ENCODE measurements at regions of chr5 and their contacts with region 1.

Region 1: DNA sequence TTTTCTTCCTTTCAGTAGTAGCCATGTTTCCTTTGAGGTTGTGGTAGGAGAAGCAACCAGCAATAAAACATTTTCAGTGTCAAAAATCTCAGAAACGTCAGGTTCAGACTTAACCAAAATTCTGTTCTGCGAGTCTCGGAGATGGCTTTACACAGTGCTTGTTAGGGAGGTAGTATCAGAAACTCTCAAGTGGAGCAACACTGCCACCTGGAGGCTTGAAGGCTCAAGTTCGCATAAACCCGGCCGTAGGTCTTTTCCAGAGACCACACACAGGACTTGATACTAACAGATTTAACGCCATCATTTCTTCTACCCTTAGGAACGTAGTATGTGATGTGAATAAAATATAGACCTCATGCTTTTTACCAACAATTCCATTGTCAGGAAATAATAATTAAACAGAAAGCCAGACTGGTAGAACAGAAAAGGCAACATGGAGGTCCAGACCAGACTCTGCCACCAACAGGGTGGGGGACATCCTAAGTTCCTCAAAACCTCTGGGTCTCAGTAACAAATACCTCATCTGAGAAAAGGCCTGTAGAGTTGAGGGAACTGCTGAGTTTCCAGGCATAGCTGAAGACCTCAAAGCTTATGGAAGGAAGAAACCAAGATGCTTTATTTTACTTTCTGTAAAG is 8.5 kb downstream of the PTGER4 start:
- DNase-seq: peak; percentile 58 to 88 (median 83)
- ATAC-seq: peak; percentile 88
- H3K4me3 ChIP-seq: peak overlapping the region; percentile 38
- H3K4me3 Mint-ChIP-seq: peak overlapping the region; percentile 76 to 100 (median 95)
- H3K27ac ChIP-seq: peak overlapping the region; percentile 60
- H3K27ac Mint-ChIP-seq: peak overlapping the region; percentile 87 to 98 (median 96)
- H3K4me1 ChIP-seq: peaks cover 30 to 32% of the 10 kb centered on the region in 2 donors
- H3K4me1 Mint-ChIP-seq: peaks cover 60 to 90% (median 82%) of the 10 kb centered on the region in 7 donors
- H3K27me3 ChIP-seq: no peaks in the 10 kb centered on the region
- H3K27me3 Mint-ChIP-seq: no peaks in the 10 kb centered on the region

Region 2: GRCh38 chr5:39177631-39177964 is 1510.6 kb before region 1 on chr5:
- CTCF ChIA-PET with region 1: no interaction called
- POLR2A ChIA-PET with region 1: no interaction called
- intact Hi-C with region 1: loop called in 1 of 2 experiments (anchors 10 kb)
- DNase-seq: peak in 7 of 9 donors; percentile 61 to 86 (median 79)
- ATAC-seq: peak; percentile 79
- H3K4me3 ChIP-seq: peak overlapping the region; percentile 46
- H3K4me3 Mint-ChIP-seq: peak overlapping the region; percentile 58 to 86 (median 80)
- H3K27ac ChIP-seq: peak overlapping the region; percentile 72
- H3K27ac Mint-ChIP-seq: peak overlapping the region; percentile 87 to 98 (median 96)
- H3K4me1 ChIP-seq: peaks cover 94 to 95% of the 10 kb centered on the region in 2 donors
- H3K4me1 Mint-ChIP-seq: peaks cover 84 to 100% (median 96%) of the 10 kb centered on the region in 7 donors
- H3K27me3 ChIP-seq: no peaks in the 10 kb centered on the region
- H3K27me3 Mint-ChIP-seq: no peaks in the 10 kb centered on the region

Region 3: DNA sequence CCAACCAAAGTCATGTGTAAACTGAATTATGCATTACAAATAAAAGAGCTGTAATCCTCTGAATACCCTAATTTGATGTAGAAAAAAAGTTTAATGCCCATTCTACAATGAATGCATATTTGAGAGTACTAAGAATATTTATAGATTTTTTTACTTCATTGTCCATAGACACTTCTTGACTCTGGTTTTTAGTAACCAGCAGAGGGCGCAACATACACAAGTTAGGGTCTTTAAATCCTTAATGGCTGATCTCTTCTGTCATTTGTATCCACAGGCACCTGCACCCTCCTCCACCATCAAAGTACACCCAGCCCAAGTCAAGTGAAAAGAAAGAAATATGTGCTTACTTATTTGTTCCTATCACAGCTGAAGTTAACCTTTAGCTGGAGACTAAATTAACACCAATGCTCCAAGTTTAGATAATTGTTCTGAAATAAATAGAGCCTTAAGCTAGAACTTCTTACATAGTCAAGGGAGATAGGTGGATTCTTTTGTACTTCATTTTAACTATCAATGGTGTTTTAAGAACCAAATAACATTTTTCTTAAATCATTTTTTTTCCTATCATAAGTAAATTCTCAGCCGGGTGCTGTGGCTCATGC is 739.3 kb before region 1 on chr5:
- CTCF ChIA-PET with region 1: interaction called, 33 read pairs
- POLR2A ChIA-PET with region 1: no interaction called
- intact Hi-C with region 1: loop called (anchors 1 kb)
- DNase-seq: peak in 8 of 9 donors; percentile 30 to 74 (median 63)
- ATAC-seq: peak; percentile 91
- H3K4me3 ChIP-seq: no peak overlapping the region
- H3K4me3 Mint-ChIP-seq: no peak overlapping the region
- H3K27ac ChIP-seq: no peak overlapping the region
- H3K27ac Mint-ChIP-seq: no peak overlapping the region
- H3K4me1 ChIP-seq: no peaks in the 10 kb centered on the region
- H3K4me1 Mint-ChIP-seq: peaks cover 0 to 4% (median 0%) of the 10 kb centered on the region in 7 donors
- H3K27me3 ChIP-seq: no peaks in the 10 kb centered on the region
- H3K27me3 Mint-ChIP-seq: no peaks in the 10 kb centered on the region

Region 4: DNA sequence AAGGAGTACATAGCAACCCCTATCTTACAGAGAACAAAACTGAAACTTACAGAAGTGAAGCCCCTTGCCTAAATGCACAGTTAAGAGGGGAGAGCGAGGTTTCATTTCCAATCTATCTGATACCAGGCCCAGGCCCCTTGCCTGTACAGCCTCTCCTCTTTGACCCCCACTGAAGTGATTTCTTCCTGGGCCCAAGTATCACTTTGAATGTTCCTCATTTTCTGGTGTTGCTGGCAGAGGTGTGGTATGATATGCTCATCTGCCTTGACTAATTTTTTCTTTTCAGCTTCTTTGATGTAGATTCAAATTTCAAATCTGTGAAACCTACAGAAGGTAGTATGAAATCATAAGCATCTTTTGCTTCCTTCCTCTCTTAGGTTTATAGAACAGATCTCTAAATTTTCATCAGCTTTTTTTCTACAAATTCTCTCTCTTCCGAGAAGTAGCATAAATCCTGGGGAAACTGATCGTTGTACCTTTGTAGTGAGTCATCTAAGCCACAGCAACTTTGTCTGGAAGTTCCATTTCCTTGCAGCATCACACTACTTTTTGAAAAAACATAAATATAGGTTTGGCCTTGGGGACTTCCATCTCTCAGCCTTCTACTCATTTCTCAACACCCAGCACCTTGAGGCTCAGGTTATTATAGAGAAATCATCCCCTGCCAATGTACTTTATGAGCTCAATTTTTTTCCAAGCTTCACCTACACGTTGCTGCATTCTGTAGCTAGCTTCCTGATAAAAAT is 410.9 kb before region 1 on chr5:
- CTCF ChIA-PET with region 1: no interaction called
- POLR2A ChIA-PET with region 1: no interaction called
- intact Hi-C with region 1: loop called in 1 of 2 experiments (anchors 2 kb)
- DNase-seq: peak in 2 of 9 donors; percentile 6 to 34
- ATAC-seq: peak; percentile 72
- H3K4me3 ChIP-seq: no peak overlapping the region
- H3K4me3 Mint-ChIP-seq: peak overlapping the region in 9 of 10 donors; percentile 7 to 72 (median 42)
- H3K27ac ChIP-seq: peak overlapping the region; percentile 45
- H3K27ac Mint-ChIP-seq: peak overlapping the region; percentile 66 to 88 (median 76)
- H3K4me1 ChIP-seq: peaks cover 9 to 16% of the 10 kb centered on the region in 2 donors
- H3K4me1 Mint-ChIP-seq: peaks cover 18 to 39% (median 33%) of the 10 kb centered on the region in 7 donors
- H3K27me3 ChIP-seq: no peaks in the 10 kb centered on the region
- H3K27me3 Mint-ChIP-seq: no peaks in the 10 kb centered on the region

Region 5: GRCh38 chr5:40410231-40410861 is 277.9 kb before region 1 on chr5:
- CTCF ChIA-PET with region 1: interaction called, 10 read pairs
- POLR2A ChIA-PET with region 1: interaction called, 6 read pairs
- intact Hi-C with region 1: loop called in 1 of 2 experiments (anchors 1 kb)
- DNase-seq: peak; percentile 23 to 98 (median 93)
- ATAC-seq: peak; percentile 91
- H3K4me3 ChIP-seq: no peak overlapping the region
- H3K4me3 Mint-ChIP-seq: peak overlapping the region; percentile 49 to 87 (median 80)
- H3K27ac ChIP-seq: peak overlapping the region; percentile 99
- H3K27ac Mint-ChIP-seq: peak overlapping the region; percentile 95 to 100 (median 99)
- H3K4me1 ChIP-seq: peaks cover 54 to 56% of the 10 kb centered on the region in 2 donors
- H3K4me1 Mint-ChIP-seq: peaks cover 38 to 76% (median 65%) of the 10 kb centered on the region in 7 donors
- H3K27me3 ChIP-seq: no peaks in the 10 kb centered on the region
- H3K27me3 Mint-ChIP-seq: no peaks in the 10 kb centered on the region

Region 6: GRCh38 chr5:40736103-40736875 is 48.0 kb after region 1 on chr5:
- CTCF ChIA-PET with region 1: no interaction called
- POLR2A ChIA-PET with region 1: interaction called, 3 read pairs
- intact Hi-C with region 1: loop called (anchors 1 kb)
- DNase-seq: peak in 7 of 9 donors; percentile 26 to 60 (median 52)
- ATAC-seq: peak; percentile 81
- H3K4me3 ChIP-seq: no peak overlapping the region
- H3K4me3 Mint-ChIP-seq: no peak overlapping the region
- H3K27ac ChIP-seq: no peak overlapping the region
- H3K27ac Mint-ChIP-seq: no peak overlapping the region
- H3K4me1 ChIP-seq: no peaks in the 10 kb centered on the region
- H3K4me1 Mint-ChIP-seq: peaks cover 18 to 33% (median 24%) of the 10 kb centered on the region in 7 donors
- H3K27me3 ChIP-seq: no peaks in the 10 kb centered on the region
- H3K27me3 Mint-ChIP-seq: no peaks in the 10 kb centered on the region

Region 7: GRCh38 chr5:40871177-40871576 is 182.9 kb after region 1 on chr5:
- CTCF ChIA-PET with region 1: no interaction called
- POLR2A ChIA-PET with region 1: no interaction called
- intact Hi-C with region 1: no loop called
- DNase-seq: no peak
- ATAC-seq: no peak
- H3K4me3 ChIP-seq: no peak overlapping the region
- H3K4me3 Mint-ChIP-seq: no peak overlapping the region
- H3K27ac ChIP-seq: no peak overlapping the region
- H3K27ac Mint-ChIP-seq: no peak overlapping the region
- H3K4me1 ChIP-seq: no peaks in the 10 kb centered on the region
- H3K4me1 Mint-ChIP-seq: peaks cover 0 to 2% (median 0%) of the 10 kb centered on the region in 7 donors
- H3K27me3 ChIP-seq: no peaks in the 10 kb centered on the region
- H3K27me3 Mint-ChIP-seq: peaks cover 0 to 10% (median 0%) of the 10 kb centered on the region in 5 donors

Region 8: GRCh38 chr5:41869739-41870626 is 1181.7 kb after region 1 on chr5 and contains the start of gene OXCT1:
- CTCF ChIA-PET with region 1: no interaction called
- POLR2A ChIA-PET with region 1: no interaction called
- intact Hi-C with region 1: loop called in 1 of 2 experiments (anchors 10 kb)
- DNase-seq: peak; percentile 88 to 96 (median 95)
- ATAC-seq: peak; percentile 97
- H3K4me3 ChIP-seq: peak within 1 kb of the TSS; percentile 91
- H3K4me3 Mint-ChIP-seq: peak within 1 kb of the TSS; percentile 85 to 94 (median 90)
- H3K27ac ChIP-seq: peak within 1 kb of the TSS; percentile 97
- H3K27ac Mint-ChIP-seq: peak within 1 kb of the TSS; percentile 89 to 98 (median 97)
- H3K4me1 ChIP-seq: peaks cover 16% of the 10 kb centered on the region in 2 donors
- H3K4me1 Mint-ChIP-seq: peaks cover 18 to 63% (median 57%) of the 10 kb centered on the region in 7 donors
- H3K27me3 ChIP-seq: no peaks in the 10 kb centered on the region
- H3K27me3 Mint-ChIP-seq: no peaks in the 10 kb centered on the region
- total RNA-seq, gene OXCT1: 18.6 to 53.1 (median 30.0) TPM

Measured in naive thymus-derived CD4-positive, alpha-beta T cell (primary cell).